B cell (primary cell): ENCODE measurements at regions of chr12 and their contacts with region 1.

Region 1: GRCh38 chr12:116060764-116061163 is 216.7 kb downstream of the MED13L start:
- DNase-seq: peak; percentile 76
- ATAC-seq: peak; percentile 84
- H3K4me3 ChIP-seq: peak overlapping the region in 4 of 5 experiments; percentile 15 to 67 (median 38)
- H3K4me3 Mint-ChIP-seq: peak overlapping the region; percentile 84
- H3K27ac ChIP-seq: peak overlapping the region; percentile 48 to 73
- H3K27ac Mint-ChIP-seq: peak overlapping the region; percentile 81
- H3K4me1 ChIP-seq: peaks cover 11 to 12% of the 10 kb centered on the region in 2 donors
- H3K4me1 Mint-ChIP-seq: peaks cover 46% of the 10 kb centered on the region
- H3K27me3 ChIP-seq: no peaks in the 10 kb centered on the region
- H3K27me3 Mint-ChIP-seq: no peaks in the 10 kb centered on the region
- CTCF ChIP-seq: no peak

Region 2: DNA sequence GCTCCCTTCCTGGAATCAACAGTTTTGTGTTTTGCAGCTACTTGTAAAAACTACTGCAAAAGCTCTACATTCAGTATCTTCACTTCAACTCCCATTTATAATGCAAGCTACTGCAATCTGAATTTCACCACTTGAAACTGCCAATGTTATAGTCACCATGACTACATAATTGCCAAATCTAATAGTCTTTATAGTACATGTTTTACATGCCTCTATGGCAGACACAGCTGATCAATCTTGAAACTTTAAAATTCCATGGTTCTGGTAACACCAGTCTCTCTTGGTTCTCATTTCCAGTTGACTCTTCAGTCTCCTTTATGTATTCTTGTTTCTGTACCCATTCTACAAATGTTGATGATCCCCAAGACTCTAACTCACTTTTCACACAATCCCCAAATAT is 30.8 kb after region 1 on chr12:
- CTCF ChIA-PET with region 1: no interaction called
- POLR2A ChIA-PET with region 1: no interaction called
- intact Hi-C with region 1: loop called (anchors 5 kb)
- DNase-seq: no peak
- ATAC-seq: no peak
- H3K4me3 ChIP-seq: no peak overlapping the region
- H3K4me3 Mint-ChIP-seq: no peak overlapping the region
- H3K27ac ChIP-seq: no peak overlapping the region
- H3K27ac Mint-ChIP-seq: no peak overlapping the region
- H3K4me1 ChIP-seq: peaks cover 5 to 7% of the 10 kb centered on the region in 2 donors
- H3K4me1 Mint-ChIP-seq: peaks cover 31% of the 10 kb centered on the region
- H3K27me3 ChIP-seq: no peaks in the 10 kb centered on the region
- H3K27me3 Mint-ChIP-seq: no peaks in the 10 kb centered on the region
- CTCF ChIP-seq: no peak